Dorsolateral prefrontal cortex (tissue), 120 donors: ENCODE measurements at regions of chr6 and their contacts with region 1.

Region 1: DNA sequence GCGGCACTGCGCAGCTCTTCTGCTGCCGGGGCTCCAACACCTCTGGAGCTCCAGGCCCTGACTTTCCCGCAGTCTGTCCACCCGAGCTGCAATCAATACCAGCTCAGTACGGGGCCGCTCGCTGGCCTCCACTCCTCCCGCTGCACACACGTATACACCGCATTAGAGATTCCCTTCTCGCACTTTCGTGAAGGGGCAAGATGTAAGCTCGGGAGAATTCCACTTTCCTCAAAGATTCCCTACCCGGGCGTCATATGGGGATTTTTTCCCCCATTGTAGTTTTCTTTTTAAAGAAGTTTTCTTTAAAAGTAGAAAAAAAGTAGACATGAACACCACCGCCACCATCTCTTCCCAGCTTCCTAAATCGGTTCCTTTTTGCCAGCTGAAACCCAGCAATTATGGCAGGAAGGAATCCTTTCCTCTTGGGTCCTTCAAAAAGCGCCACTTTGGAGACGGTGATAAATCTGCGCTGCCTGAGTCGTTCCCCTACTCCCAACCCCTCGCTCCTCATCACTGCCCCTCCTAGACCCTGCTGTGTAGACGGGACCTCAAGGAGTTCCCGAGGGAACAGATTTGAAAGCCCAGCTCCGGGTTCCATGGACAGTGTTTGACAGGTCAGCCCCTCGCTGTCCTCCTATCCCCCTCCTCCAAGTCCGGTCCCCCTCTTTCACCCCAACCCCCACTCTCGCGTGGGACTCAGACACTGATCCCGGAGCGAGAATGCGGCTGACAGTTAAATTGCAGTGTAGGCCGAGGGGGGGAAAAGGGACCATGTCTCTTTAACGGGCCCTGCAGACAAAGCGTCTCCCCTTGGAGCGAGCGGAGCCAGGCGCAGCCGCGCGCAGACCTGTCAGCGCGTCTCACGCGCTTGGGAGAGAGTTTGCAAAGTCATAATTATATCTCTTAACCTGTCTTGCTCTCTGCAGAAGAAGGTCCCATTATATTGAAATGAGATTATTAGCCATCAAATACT is 39.5 kb downstream of the NCR2 start:
- DNase-seq: no peak
- H3K4me3 ChIP-seq: peak overlapping the region in 50 of 59 donors; percentile 8 to 67 (median 36)
- H3K27ac ChIP-seq: no peak overlapping the region
- H3K27me3 ChIP-seq: peaks cover 0 to 74% (median 51%) of the 10 kb centered on the region in 45 donors
- CTCF ChIP-seq: no peak

Region 2: GRCh38 chr6:41413250-41413649 is 38.3 kb after region 1 on chr6:
- intact Hi-C with region 1: loop called in 1 of 2 experiments (anchors 5 kb)
- DNase-seq: no peak
- H3K4me3 ChIP-seq: no peak overlapping the region
- H3K27ac ChIP-seq: no peak overlapping the region
- H3K27me3 ChIP-seq: peaks cover 0 to 49% (median 17%) of the 10 kb centered on the region in 45 donors
- CTCF ChIP-seq: no peak

Region 3: GRCh38 chr6:41488433-41489119 is 113.7 kb after region 1 on chr6:
- intact Hi-C with region 1: no loop called
- DNase-seq: no peak
- H3K4me3 ChIP-seq: no peak overlapping the region
- H3K27ac ChIP-seq: no peak overlapping the region
- H3K27me3 ChIP-seq: peaks cover 0 to 4% (median 0%) of the 10 kb centered on the region in 45 donors
- CTCF ChIP-seq: no peak

Region 4: GRCh38 chr6:41591859-41592502 is 217.1 kb after region 1 on chr6:
- intact Hi-C with region 1: no loop called
- DNase-seq: peak in 9 of 10 donors; percentile 70 to 84 (median 79)
- H3K4me3 ChIP-seq: no peak overlapping the region
- H3K27ac ChIP-seq: peak overlapping the region in 1 of 59 donors; percentile 19
- H3K27me3 ChIP-seq: no peaks in the 10 kb centered on the region
- CTCF ChIP-seq: peak; percentile 83 to 98 (median 94)